CD4-positive, alpha-beta T cell (primary cell): ENCODE measurements at regions of chr2 and their contacts with region 1.

Region 1: GRCh38 chr2:239882331-239882732 is 142.8 kb downstream of the NDUFA10 start:
- DNase-seq: peak; percentile 33 to 76 (median 58)
- ATAC-seq: peak; percentile 72
- H3K4me3 ChIP-seq: no peak overlapping the region
- H3K4me3 Mint-ChIP-seq: no peak overlapping the region
- H3K27ac ChIP-seq: no peak overlapping the region
- H3K27ac Mint-ChIP-seq: no peak overlapping the region
- H3K4me1 ChIP-seq: peaks cover 11% of the 10 kb centered on the region
- H3K4me1 Mint-ChIP-seq: peaks cover 10% of the 10 kb centered on the region
- H3K27me3 ChIP-seq: no peaks in the 10 kb centered on the region
- H3K27me3 Mint-ChIP-seq: peaks cover 4% of the 10 kb centered on the region
- CTCF ChIP-seq: peak; percentile 72

Region 2: GRCh38 chr2:239035361-239036078 is 846.8 kb before region 1 on chr2:
- CTCF ChIA-PET with region 1: no interaction called
- POLR2A ChIA-PET with region 1: no interaction called
- intact Hi-C with region 1: loop called in 1 of 2 experiments (anchors 1 kb)
- DNase-seq: peak; percentile 47 to 78 (median 62)
- ATAC-seq: peak; percentile 92
- H3K4me3 ChIP-seq: no peak overlapping the region
- H3K4me3 Mint-ChIP-seq: no peak overlapping the region
- H3K27ac ChIP-seq: no peak overlapping the region
- H3K27ac Mint-ChIP-seq: no peak overlapping the region
- H3K4me1 ChIP-seq: peaks cover 7% of the 10 kb centered on the region
- H3K4me1 Mint-ChIP-seq: no peaks in the 10 kb centered on the region
- H3K27me3 ChIP-seq: peaks cover 8 to 13% of the 10 kb centered on the region in 2 experiments
- H3K27me3 Mint-ChIP-seq: peaks cover 8% of the 10 kb centered on the region
- CTCF ChIP-seq: peak; percentile 88